ENCODE measurements at regions of chr12 and their contacts with region 1.

Region 1: GRCh38 chr12:54201001-54201794 is 12.4 kb upstream of the SMUG1 start:
- DNase-seq: peak; percentile 86
- H3K4me3 ChIP-seq: no peak overlapping the region
- H3K27ac ChIP-seq: no peak overlapping the region
- H3K4me1 ChIP-seq: peaks cover 16% of the 10 kb centered on the region
- H3K27me3 ChIP-seq: no peaks in the 10 kb centered on the region
- CTCF ChIP-seq: peak; percentile 97

Region 2: DNA sequence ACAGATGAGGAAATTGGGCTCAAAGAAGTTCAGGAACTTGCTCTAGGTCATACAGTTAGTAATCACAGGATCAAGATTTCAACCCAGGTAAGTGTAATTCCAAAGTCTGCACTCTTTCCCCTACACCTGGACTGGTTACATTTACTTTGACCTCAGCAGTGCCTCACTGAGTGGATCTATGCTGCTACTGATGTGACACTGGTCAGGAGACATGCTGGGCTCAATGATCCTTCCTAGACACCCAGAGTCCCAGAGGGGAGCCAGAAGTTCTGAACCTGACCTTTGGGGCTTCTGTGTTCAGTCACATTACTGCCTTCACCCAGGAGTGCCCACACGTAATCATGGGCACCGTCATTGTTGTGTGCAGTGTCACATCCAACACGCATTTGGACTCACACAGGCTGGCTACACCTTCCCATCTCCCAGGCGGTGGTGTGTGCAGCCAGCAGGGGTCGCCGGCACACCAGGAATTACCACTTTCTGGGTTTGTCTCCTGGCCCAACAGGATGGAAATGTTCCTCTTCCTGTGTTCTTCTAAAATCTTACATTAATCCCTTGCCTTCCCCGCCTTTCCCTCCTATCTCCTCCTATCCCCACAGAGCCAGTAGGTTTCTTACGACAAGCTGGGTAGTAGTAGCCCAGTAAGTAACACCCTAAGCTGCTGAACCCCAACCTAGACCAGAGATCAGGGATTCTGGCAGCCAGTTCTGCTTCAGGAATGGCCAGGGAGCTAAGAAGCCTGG is 499.5 kb before region 1 on chr12:
- CTCF ChIA-PET with region 1: interaction called, 5 read pairs
- POLR2A ChIA-PET with region 1: no interaction called
- intact Hi-C with region 1: loop called (anchors 5 kb)
- DNase-seq: peak; percentile 85
- H3K4me3 ChIP-seq: no peak overlapping the region
- H3K27ac ChIP-seq: no peak overlapping the region
- H3K4me1 ChIP-seq: peaks cover 15% of the 10 kb centered on the region
- H3K27me3 ChIP-seq: no peaks in the 10 kb centered on the region
- CTCF ChIP-seq: peak; percentile 98

Region 3: GRCh38 chr12:53995378-53996239 is 205.6 kb before region 1 on chr12:
- CTCF ChIA-PET with region 1: interaction called, 12 read pairs
- POLR2A ChIA-PET with region 1: no interaction called
- intact Hi-C with region 1: no loop called
- DNase-seq: peak; percentile 82
- H3K4me3 ChIP-seq: peak overlapping the region; percentile 70
- H3K27ac ChIP-seq: peak overlapping the region; percentile 98
- H3K4me1 ChIP-seq: peaks cover 75% of the 10 kb centered on the region
- H3K27me3 ChIP-seq: no peaks in the 10 kb centered on the region
- CTCF ChIP-seq: no peak

Region 4: DNA sequence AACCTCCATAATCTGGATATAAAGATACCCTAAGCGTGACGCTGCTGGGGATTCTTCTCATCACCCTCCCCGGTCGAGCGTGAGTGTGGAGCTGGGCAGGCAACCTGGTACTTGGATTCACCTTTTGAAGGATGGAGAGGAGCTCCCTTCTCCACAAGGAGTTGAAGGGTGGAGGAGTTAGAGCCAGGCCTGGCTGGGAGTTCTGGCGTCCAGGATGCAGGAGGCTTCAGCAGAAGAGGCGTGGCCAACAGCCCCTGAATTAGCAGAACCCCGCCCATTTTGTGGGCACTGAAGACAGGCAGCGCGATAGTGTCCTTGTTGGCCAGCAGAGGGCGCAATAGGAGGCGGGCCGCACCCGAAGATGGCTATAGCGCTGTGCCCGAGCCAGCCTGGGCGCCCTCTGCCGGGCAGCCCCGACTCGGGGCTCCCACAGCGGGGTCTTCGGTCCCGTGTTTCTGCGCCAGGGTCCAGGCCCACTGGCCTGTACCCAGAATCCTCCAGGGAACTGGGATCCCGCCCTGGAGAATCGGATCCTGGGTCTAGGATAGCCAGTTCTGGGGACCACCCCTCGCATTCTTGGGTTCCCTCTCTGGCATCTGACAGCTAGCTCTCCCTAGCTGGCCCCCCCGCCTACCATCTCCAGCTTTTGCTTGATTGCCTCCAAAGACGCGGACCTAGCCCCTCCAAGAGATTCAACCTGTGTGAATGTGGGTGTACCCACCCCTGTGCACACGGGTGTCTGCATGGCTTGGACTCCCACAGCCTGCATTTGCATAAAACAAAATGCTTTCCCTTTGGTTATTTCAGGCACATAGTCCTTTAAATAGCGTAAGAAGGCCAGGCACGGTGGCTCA is 13.6 kb after region 1 on chr12:
- CTCF ChIA-PET with region 1: interaction called, 16 read pairs
- POLR2A ChIA-PET with region 1: no interaction called
- intact Hi-C with region 1: no loop called
- DNase-seq: peak; percentile 96
- H3K4me3 ChIP-seq: peak overlapping the region; percentile 31
- H3K27ac ChIP-seq: no peak overlapping the region
- H3K4me1 ChIP-seq: peaks cover 19% of the 10 kb centered on the region
- H3K27me3 ChIP-seq: no peaks in the 10 kb centered on the region
- CTCF ChIP-seq: peak; percentile 100